Ascending aorta (tissue), 2 donors: ENCODE measurements at regions of chr19 and their contacts with region 1.

Region 1: DNA sequence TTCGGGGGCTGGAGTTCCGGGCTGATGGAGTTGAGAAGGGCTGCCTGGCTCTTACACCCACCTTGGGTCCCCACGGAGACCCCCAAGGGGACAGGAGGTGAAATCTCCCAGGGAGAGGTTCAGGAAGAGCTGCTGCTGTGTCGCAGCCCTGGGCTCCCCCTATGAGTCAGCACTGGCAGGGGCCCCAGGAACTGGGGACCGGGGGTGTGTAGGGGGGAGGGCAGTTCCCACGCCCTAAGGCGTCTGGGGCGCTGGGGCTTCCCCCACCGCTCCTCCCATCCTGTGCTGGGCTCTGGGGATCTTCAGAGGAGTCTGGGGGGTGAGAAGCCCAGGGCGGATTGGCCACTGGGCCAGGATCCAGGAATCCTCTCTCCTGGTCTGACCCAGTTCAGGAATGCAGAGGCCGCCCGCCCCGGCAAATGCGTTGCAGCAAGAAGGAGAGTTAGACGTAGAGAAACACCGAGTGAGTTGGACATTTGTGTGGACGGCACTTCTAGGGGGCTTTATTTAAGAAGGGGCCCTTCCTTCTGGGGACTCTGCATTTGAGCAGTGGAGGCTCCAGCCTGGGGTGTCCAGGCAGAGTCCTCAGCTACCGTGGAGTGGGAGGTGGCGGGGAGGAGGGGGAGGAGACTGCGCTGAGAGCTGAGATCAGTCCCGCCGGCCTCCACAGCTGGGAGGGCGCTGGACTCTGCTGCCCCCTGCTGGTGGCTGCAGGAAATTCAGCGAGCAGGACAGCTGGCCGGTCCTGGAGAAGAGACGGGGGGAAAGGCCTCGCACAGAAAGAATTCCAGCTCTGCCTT is 15.0 kb upstream of the NANOS3 start:
- DNase-seq: peak; percentile 76 to 96
- H3K4me3 ChIP-seq: peak overlapping the region; percentile 51 to 60
- H3K27ac ChIP-seq: peak overlapping the region; percentile 82 to 89
- H3K4me1 ChIP-seq: peaks cover 5 to 8% of the 10 kb centered on the region in 2 donors
- H3K27me3 ChIP-seq: no peaks in the 10 kb centered on the region
- CTCF ChIP-seq: peak; percentile 97 to 99 (median 97)

Region 2: DNA sequence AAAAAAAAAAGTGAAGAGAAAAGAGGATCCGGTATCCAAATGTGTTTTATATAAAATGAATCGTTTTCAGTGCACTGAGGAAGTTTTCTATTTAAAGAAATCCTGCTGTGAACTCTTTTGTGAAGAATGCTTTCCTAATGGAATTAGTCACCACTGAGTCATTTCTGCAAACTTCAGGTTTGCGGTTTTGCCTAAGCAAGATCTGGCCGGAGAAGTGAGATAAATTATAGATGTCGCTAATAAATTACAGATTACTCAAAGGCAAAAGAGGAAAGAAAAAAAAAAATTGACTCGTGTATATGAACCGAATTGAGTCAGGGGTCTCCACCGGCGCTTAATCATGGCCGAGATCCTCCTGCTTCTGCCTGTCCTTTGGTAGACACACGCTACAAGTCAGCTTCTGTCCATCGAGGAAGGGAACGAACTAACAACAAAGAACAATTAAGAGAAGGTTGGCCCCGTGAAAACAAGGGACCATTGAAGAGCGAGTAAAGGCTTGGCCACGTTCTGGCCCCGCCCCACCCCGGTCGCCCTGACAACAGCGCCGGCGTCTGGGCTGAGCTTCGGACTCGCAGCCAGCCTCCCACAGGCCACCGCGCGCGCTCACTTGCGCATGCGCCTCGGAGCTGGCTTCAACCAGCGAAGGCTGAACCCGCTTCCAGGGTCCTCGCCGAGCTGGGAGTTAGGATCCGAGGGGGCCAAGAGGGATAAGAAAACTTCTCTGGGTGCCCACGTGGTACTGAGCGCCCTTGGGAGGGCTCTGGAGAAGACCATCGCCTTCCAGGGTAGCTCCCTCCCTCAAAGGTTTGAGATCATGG is 130.6 kb before region 1 on chr19:
- intact Hi-C with region 1: loop called (anchors 2 kb)
- DNase-seq: peak; percentile 65 to 96
- H3K4me3 ChIP-seq: peak overlapping the region; percentile 50 to 70
- H3K27ac ChIP-seq: peak overlapping the region; percentile 88 to 95
- H3K4me1 ChIP-seq: peaks cover 3 to 39% of the 10 kb centered on the region in 2 donors
- H3K27me3 ChIP-seq: no peaks in the 10 kb centered on the region
- CTCF ChIP-seq: no peak

Region 3: DNA sequence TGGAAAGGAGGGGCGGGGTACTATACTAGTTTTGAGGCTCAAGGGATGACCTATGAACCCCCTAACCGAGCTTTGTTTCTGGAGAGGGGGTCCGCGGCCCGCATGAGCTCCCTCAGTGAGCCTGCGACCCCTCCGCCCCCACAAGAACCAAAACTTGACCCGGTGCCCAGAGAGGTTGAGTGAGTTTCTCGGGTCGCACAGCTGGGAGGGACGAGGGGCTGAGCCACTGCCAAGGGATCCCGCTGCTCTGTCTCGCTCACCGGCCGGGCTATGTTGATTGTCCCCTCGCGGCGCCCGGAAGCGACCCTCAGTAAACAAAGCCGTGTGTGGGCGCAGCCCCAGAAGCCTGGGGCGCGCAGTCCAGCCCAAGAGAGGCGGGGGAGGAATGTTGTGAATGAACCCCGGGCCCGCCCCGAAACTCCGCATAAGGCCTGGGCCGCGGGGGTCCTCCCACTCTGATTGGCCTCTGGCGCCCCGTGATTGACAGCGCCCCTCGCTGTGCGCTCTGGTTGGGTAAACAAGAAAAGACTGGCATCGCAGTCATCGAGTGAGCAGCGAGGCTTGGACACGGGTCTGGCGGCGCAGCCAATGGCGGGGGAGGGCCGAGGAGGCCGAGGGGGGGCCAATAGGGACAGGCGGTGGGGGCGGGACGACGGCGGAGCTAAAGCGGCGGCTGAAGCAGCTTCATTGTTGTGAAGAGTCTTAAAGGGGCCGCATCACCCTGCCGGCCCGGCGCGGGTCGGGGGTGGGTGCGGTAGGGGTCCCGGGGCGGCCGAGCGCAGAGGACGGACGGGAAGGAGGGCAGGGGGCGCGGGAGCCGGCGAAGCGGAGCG is 67.0 kb before region 1 on chr19 and contains the start of gene ZSWIM4:
- intact Hi-C with region 1: loop called (anchors 2 kb)
- DNase-seq: peak; percentile 98 to 100
- H3K4me3 ChIP-seq: peak within 1 kb of the TSS; percentile 86 to 88
- H3K27ac ChIP-seq: peak within 1 kb of the TSS; percentile 92 to 96
- H3K4me1 ChIP-seq: peaks cover 7 to 30% of the 10 kb centered on the region in 2 donors
- H3K27me3 ChIP-seq: no peaks in the 10 kb centered on the region
- CTCF ChIP-seq: no peak
- total RNA-seq, gene ZSWIM4: 23.2 TPM

Region 4: DNA sequence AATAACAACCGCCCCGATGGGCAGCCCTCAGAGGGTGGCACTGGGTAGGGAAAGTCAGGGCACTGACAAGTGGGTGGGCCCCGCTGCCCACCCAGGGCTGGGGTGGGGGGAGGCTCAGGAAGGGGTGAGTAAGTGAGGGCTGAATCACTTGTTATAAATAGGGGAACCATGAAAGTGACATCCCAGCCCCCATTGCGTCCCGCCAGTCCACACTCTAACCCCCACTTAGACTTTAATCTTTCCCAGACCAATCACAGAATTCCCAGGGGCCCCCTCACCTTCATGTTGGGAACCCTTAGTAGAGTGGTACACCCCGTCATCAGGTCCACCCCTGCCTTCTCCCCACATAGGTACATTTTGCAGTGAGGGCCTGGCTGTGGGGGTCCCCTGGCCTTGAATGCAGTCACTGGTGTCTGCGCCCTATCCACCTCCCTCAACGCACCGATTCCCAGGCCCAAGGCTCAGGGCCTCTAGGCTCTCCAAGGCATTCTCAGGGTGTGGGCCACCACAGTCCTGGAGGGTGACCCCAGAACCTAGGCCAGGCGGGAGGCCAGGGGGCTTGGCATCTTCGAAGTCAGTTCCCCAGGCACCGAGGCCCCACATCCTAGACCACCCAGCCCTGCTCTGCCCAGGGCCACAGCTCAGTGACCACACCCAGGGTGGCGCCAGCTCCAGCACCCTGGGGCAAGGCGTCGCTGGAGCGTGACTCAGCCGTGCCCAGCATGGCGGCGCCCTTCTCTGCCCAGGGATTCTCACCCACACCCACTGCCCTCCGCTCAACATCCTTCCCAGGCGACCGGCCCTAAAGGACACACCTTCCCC is 21.8 kb before region 1 on chr19:
- intact Hi-C with region 1: loop called (anchors 1 kb)
- DNase-seq: peak; percentile 60 to 86
- H3K4me3 ChIP-seq: peak overlapping the region; percentile 92 to 99
- H3K27ac ChIP-seq: peak overlapping the region; percentile 99 to 100
- H3K4me1 ChIP-seq: peaks cover 30 to 49% of the 10 kb centered on the region in 2 donors
- H3K27me3 ChIP-seq: no peaks in the 10 kb centered on the region
- CTCF ChIP-seq: no peak

Region 5: GRCh38 chr19:13881692-13882418 is 19.9 kb after region 1 on chr19:
- intact Hi-C with region 1: no loop called
- DNase-seq: no peak
- H3K4me3 ChIP-seq: no peak overlapping the region
- H3K27ac ChIP-seq: peak overlapping the region; percentile 58 to 81
- H3K4me1 ChIP-seq: peaks cover 6 to 13% of the 10 kb centered on the region in 2 donors
- H3K27me3 ChIP-seq: no peaks in the 10 kb centered on the region
- CTCF ChIP-seq: no peak